Heart right ventricle (tissue), 16 donors: ENCODE measurements at regions of chr15 and their contacts with region 1.

Region 1: DNA sequence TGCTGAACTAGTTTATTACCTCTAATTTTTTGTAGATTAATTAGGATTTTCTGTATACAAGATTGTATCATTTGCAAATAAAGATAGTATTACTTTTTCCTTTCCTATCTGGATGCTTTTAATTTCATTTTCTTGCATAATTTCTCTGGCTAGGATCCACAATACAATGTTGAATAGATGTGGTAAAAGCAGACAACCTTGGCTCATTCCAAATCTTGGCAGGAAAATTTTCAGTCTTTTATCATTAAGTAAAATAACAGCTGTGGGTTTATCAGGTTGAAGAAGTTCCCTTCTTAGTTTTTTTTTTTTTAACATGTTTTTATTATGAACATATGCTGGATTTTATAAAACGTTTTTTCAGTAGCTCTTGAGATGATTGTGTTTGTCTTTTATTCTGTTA is 422.6 kb downstream of the AGBL1 start:
- DNase-seq: no peak
- ATAC-seq: no peak
- H3K4me3 ChIP-seq: no peak overlapping the region
- H3K27ac ChIP-seq: no peak overlapping the region
- H3K4me1 ChIP-seq: no peaks in the 10 kb centered on the region
- H3K27me3 ChIP-seq: no peaks in the 10 kb centered on the region
- CTCF ChIP-seq: no peak

Region 2: DNA sequence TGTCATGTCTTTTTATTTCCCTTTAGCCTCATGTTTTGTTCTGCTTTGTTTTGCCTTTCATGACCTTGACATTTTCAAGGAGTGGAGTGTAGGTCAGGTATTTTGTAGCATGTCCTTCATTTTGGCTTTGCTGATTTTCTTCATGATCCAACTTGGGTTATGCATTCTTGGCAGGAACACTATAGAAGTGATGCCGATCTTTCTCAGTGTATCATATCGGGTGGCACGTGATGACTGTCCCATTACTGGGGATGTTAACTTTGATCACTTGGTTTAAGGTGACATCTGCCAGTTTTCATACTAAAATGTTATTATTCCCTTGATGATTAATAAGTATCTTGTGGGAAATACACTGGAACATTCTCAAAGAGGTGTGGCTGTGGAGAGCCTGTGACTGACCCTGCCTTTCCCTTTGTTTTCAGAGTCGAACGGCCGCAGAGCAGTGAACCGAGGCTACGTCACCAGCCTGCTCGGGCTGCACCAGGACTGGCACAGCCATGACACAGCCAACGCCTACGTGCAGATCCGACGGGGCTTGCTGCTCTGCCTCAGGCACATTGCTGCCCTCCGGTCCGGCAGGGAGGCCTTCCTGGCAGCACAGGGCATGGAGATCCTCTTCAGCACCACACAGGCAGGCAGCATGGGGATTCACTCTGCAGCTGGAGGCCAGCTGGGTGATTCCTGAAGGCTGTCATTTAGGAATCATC is 254.9 kb before region 1 on chr15:
- intact Hi-C with region 1: no loop called
- DNase-seq: no peak
- ATAC-seq: no peak
- H3K4me3 ChIP-seq: no peak overlapping the region
- H3K27ac ChIP-seq: no peak overlapping the region
- H3K4me1 ChIP-seq: no peaks in the 10 kb centered on the region
- H3K27me3 ChIP-seq: peaks cover 0 to 4% (median 0%) of the 10 kb centered on the region in 7 donors
- CTCF ChIP-seq: no peak

Region 3: DNA sequence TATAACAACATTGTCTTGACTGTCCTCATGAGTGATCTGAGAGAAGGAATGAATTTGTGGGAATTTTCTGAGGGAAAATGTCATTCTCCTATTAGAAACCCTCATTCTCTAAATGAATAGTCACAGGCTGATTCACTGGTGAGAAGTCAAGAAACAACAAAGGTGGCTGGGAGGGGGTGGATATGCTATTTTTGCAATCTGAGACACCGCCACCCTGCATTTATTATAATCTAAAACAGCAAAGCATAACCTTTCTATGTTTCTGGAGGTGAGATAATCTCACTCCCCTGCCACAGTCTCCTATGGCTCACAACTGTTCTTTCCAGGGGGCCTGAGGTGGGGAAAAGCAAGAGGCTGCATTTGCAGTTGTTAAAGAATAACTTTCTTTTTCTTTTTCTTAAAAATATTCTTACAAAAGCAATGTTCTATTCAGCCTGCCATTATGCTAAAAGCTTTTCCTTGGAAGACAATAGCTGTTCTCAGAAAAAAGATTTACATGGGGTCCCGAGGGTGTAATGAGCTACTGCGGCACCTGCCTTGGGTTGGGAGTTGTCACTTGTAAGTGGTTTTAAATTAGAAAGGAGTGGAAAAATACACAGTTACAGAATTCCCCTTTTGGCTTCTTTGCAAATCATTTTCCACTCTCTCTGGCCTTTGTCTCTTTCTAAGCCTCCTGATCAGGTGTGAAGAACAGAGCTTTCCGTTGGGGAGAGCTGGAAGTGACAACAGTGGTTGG is 201.7 kb before region 1 on chr15:
- intact Hi-C with region 1: no loop called
- DNase-seq: no peak
- ATAC-seq: no peak
- H3K4me3 ChIP-seq: no peak overlapping the region
- H3K27ac ChIP-seq: no peak overlapping the region
- H3K4me1 ChIP-seq: no peaks in the 10 kb centered on the region
- H3K27me3 ChIP-seq: peaks cover 0 to 3% (median 0%) of the 10 kb centered on the region in 7 donors
- CTCF ChIP-seq: no peak

Region 4: DNA sequence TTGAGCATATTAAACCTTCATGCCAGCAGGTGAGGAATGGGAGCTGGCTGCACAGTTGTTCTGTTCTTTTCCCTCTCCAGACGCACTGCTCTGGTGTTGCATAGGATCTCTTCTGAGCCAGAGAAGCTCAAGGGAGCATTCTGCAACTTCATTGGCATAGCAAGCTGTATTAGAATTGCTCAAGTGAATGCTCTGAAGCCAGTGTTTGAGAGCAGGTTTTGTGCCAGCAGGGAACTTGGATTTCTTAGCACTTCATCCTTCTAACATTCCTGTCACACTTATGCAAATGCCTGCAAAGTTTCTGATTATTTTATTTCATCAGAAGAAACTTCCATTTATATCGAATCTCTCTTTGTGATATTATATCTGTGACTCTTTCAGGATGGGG is 56.1 kb before region 1 on chr15:
- intact Hi-C with region 1: no loop called
- DNase-seq: no peak
- ATAC-seq: peak in 1 of 8 donors; percentile 17
- H3K4me3 ChIP-seq: no peak overlapping the region
- H3K27ac ChIP-seq: no peak overlapping the region
- H3K4me1 ChIP-seq: no peaks in the 10 kb centered on the region
- H3K27me3 ChIP-seq: peaks cover 0 to 11% (median 0%) of the 10 kb centered on the region in 7 donors
- CTCF ChIP-seq: no peak

Region 5: DNA sequence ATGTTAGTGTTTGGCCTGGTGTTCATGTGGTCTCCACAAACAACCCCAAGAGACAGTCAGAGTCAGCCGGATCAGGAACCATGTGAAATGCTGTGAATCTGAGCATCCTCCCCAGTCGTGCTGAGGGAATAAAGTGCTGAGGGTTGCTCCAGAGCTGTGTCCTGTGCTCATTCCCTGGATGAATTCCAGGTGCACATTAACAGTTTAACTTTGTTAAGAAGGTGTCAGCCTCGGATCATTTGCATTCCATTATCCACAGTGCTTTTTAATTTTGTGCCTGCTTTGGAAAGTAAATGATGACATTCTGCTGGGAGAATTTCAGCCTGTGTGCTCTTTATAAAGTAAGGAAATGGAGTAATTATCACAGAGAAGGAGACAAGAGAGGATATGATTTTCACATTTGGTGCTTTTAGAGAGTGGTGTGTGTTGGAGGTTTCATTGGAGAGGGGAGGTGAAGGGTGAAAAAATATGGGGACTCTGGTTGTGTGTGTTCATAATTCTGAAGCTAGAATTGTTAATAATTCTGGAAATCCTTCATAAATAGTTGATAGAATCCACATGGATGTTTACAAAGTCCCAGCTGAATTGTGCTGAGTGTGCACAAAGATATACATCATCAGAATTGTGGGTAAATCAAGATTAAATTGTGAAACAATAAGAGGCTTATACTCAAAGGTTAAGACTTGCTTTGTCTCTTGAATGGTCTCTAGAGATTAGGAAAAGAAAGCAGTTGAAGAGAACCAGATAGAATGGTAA is 198.7 kb after region 1 on chr15:
- intact Hi-C with region 1: no loop called
- DNase-seq: no peak
- ATAC-seq: no peak
- H3K4me3 ChIP-seq: no peak overlapping the region
- H3K27ac ChIP-seq: no peak overlapping the region
- H3K4me1 ChIP-seq: no peaks in the 10 kb centered on the region
- H3K27me3 ChIP-seq: peaks cover 0 to 4% (median 0%) of the 10 kb centered on the region in 7 donors
- CTCF ChIP-seq: no peak

Region 6: DNA sequence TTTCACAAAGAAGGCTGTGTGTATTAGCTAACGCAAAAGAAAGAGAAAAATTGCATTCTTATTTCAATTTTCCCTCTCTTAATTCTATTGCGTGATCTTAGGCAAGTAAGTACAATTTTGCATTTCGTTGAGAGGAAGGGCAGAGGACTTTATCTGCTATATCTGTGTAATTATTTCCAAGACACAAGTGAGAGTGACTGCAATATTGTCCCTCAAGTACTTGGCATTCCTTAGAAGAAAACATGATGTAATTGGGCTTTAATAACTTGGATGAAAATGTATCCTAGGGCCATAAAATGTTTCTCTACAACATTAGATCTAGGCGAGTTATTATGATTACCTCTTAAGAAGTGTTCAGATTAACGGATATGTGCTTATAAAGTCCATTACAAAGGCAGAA is 511.9 kb after region 1 on chr15:
- intact Hi-C with region 1: loop called in 1 of 10 experiments (anchors 5 kb)
- DNase-seq: no peak
- ATAC-seq: no peak
- H3K4me3 ChIP-seq: no peak overlapping the region
- H3K27ac ChIP-seq: no peak overlapping the region
- H3K4me1 ChIP-seq: no peaks in the 10 kb centered on the region
- H3K27me3 ChIP-seq: no peaks in the 10 kb centered on the region
- CTCF ChIP-seq: no peak